Activated CD4-positive, alpha-beta T cell treated with anti-CD3 and anti-CD28 coated beads for 36 hours (primary cell): ENCODE measurements at regions of chr7 and their contacts with region 1.

Region 1: GRCh38 chr7:129617652-129618051 is 6.1 kb downstream of the NRF1 start:
- DNase-seq: no peak
- ATAC-seq: no peak
- H3K4me3 Mint-ChIP-seq: no peak overlapping the region
- H3K27ac Mint-ChIP-seq: peak overlapping the region; percentile 19
- H3K4me1 Mint-ChIP-seq: peaks cover 71% of the 10 kb centered on the region
- H3K27me3 Mint-ChIP-seq: no peaks in the 10 kb centered on the region

Region 2: DNA sequence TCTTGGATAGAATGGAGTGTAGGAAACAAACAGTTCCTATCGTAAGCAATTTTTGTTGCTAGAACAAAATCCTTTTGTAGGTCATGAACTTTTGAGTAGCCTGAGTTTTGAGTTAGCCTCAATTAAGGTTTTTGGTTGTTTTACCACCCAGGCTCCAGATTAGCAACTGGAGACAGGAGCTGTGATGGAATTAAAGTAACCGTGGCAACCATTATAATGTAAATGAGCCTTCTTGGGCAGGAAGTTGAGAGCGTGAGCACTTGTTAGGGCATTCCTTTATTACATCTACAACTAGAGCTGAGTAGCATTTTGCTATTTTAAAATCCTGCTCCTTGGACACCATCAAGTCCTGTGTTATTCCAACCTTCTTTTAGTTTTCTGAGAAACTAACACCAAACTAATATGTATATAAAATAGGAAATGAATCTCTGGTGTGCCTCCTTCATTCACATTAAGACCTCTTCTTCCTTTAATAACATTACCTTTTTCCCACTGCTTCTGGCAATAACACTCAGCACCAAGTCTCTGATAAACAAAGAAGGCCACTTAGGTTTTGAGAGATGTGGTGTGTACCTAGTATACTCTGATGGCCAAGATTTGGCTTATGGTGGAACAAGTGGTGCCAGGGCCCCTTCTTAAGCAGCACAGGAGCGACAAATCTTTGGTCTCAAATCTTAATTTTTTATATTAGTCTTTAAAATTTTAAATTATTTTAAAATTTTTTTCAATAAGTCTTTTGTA is 358.8 kb before region 1 on chr7:
- CTCF ChIA-PET with region 1: no interaction called
- POLR2A ChIA-PET with region 1: no interaction called
- intact Hi-C with region 1: no loop called
- DNase-seq: no peak
- ATAC-seq: peak; percentile 51
- H3K4me3 Mint-ChIP-seq: no peak overlapping the region
- H3K27ac Mint-ChIP-seq: no peak overlapping the region
- H3K4me1 Mint-ChIP-seq: peaks cover 30% of the 10 kb centered on the region
- H3K27me3 Mint-ChIP-seq: no peaks in the 10 kb centered on the region

Region 3: DNA sequence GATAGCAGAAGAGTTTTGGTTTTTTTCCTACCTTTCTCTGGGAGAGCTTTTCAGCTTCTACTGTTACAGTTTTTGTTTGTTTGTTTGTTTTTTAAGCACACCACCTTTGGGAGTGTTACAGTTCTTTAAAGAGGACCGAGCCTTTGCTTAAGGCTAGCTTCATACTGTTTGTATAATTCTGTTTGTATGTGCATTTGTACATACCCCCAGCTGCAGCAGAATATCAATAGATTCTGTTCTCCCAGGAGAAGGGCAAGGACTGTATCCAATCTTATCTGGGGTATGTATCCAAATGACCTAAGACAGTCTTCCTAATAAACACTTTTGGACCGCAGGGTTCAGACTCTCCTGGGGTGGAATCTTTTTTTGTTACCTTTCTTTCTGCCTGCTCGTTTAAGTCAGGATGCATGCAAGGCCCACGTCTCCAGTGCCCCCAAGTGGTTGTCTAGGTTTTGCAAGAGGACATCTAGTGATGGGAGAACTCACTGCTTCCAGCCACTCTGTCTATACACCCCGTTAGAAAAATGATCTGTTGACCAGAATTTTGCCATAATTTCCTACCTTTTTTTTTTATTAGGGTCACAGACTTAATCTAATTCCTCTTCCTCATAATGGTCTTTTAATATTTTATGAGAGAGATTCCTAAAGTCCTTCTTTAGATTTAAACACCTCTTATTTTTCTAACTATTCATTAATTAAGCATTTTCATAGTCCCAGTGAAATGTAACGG is 17.8 kb after region 1 on chr7:
- CTCF ChIA-PET with region 1: interaction called, 20 read pairs
- POLR2A ChIA-PET with region 1: interaction called, 3 read pairs
- intact Hi-C with region 1: loop called (anchors 1 kb)
- DNase-seq: peak; percentile 84
- ATAC-seq: peak; percentile 97
- H3K4me3 Mint-ChIP-seq: no peak overlapping the region
- H3K27ac Mint-ChIP-seq: peak overlapping the region; percentile 65
- H3K4me1 Mint-ChIP-seq: peaks cover 37% of the 10 kb centered on the region
- H3K27me3 Mint-ChIP-seq: no peaks in the 10 kb centered on the region

Region 4: DNA sequence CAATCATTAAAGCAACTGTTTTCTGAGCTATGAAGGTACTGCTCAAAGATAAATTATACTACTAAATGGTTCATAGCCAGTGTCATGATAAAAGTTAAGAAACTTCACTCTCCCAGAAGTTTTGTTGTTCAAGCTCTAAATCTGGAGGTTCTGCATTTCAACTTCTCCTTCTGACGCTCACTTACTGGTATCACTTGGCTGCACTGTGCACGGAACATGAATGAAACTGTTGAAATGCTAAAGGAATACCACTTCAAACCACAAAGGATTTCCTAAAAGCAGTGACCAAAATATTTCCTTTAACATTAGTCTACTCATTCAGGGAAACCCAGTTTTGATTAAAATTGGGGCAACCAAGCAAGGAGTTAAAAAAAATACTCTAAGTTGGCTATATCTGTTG is 241.5 kb after region 1 on chr7:
- CTCF ChIA-PET with region 1: no interaction called
- POLR2A ChIA-PET with region 1: no interaction called
- intact Hi-C with region 1: no loop called
- DNase-seq: no peak
- ATAC-seq: peak; percentile 39
- H3K4me3 Mint-ChIP-seq: no peak overlapping the region
- H3K27ac Mint-ChIP-seq: no peak overlapping the region
- H3K4me1 Mint-ChIP-seq: peaks cover 62% of the 10 kb centered on the region
- H3K27me3 Mint-ChIP-seq: no peaks in the 10 kb centered on the region

Region 5: DNA sequence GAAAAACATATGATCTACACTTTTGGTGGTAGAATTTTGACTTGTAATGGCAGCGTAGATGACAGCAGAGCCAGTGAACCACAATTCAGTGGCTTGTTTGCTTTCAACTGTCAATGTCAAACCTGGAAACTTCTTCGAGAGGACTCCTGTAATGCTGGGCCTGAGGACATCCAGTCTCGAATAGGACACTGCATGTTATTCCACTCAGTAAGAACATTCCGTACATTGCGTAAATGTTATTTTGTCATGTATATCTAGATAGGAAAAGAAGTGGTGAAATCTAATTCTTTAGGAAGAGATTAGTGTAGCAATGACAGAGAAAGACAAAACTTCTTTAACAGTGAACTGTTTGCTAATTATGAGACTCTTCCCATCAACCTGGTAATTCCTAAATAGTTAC is 1825.8 kb after region 1 on chr7:
- CTCF ChIA-PET with region 1: no interaction called
- POLR2A ChIA-PET with region 1: no interaction called
- intact Hi-C with region 1: no loop called
- DNase-seq: no peak
- ATAC-seq: no peak
- H3K4me3 Mint-ChIP-seq: no peak overlapping the region
- H3K27ac Mint-ChIP-seq: no peak overlapping the region
- H3K4me1 Mint-ChIP-seq: no peaks in the 10 kb centered on the region
- H3K27me3 Mint-ChIP-seq: no peaks in the 10 kb centered on the region